Activated B cell treated with CpG ODN at 0.5 μM for 24 hours (primary cell): ENCODE measurements at regions of chr2 and their contacts with region 1.

Region 1: DNA sequence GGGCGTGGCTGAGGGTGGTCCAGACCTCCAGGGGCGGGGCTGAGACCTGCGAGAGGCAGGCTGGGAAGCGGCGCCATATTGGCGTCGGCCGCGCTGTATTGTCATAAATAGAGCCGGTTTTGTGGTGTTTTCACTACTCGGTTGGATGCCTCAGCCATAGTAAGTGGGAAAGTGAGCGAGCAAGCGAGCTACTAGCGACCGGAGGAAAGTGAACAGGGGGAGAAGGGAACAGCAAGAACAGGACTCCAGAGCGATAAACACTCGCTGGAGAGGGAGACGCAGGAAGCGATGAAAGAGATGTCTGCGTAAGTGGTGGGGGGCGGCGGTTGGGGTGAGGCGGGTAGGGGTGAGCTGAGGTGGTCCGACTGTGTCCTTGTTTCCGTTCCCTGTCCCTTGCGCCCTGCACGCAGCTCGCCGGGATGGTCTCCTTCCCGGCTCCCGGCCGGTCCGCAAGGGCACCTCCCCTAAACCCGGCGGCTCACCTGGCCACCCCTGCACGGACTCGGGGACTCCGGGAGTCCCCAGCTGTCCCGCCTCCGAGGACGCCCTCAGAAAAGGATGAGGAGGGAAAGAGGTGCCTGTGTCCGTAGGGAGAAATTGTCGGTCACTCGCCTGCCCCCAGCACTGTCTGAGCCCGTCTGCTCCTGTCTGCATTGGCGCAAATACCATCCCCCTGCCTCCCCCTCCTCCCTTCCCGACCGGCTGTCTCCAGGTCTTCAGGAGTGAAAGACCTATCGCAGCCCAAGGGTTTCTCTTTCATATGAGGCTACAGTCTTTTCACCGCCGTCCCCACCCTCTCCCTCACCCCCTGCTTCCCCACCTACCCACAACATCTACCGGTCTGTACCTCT is at the start of gene PAPOLG:
- DNase-seq: peak; percentile 96
- ATAC-seq: peak; percentile 100
- H3K4me3 Mint-ChIP-seq: peak within 1 kb of the TSS; percentile 100
- H3K27ac Mint-ChIP-seq: peak within 1 kb of the TSS; percentile 99
- H3K4me1 Mint-ChIP-seq: peaks cover 29% of the 10 kb centered on the region
- H3K27me3 Mint-ChIP-seq: no peaks in the 10 kb centered on the region
- CTCF ChIP-seq: no peak
- total RNA-seq, gene PAPOLG: 20.3 and 20.5 TPM in 2 replicates

Region 2: GRCh38 chr2:60641811-60642788 is 114.3 kb before region 1 on chr2:
- CTCF ChIA-PET with region 1: no interaction called
- POLR2A ChIA-PET with region 1: no interaction called
- intact Hi-C with region 1: no loop called
- DNase-seq: no peak
- ATAC-seq: peak; percentile 56
- H3K4me3 Mint-ChIP-seq: no peak overlapping the region
- H3K27ac Mint-ChIP-seq: no peak overlapping the region
- H3K4me1 Mint-ChIP-seq: peaks cover 23% of the 10 kb centered on the region
- H3K27me3 Mint-ChIP-seq: peaks cover 3% of the 10 kb centered on the region
- CTCF ChIP-seq: peak; percentile 34

Region 3: DNA sequence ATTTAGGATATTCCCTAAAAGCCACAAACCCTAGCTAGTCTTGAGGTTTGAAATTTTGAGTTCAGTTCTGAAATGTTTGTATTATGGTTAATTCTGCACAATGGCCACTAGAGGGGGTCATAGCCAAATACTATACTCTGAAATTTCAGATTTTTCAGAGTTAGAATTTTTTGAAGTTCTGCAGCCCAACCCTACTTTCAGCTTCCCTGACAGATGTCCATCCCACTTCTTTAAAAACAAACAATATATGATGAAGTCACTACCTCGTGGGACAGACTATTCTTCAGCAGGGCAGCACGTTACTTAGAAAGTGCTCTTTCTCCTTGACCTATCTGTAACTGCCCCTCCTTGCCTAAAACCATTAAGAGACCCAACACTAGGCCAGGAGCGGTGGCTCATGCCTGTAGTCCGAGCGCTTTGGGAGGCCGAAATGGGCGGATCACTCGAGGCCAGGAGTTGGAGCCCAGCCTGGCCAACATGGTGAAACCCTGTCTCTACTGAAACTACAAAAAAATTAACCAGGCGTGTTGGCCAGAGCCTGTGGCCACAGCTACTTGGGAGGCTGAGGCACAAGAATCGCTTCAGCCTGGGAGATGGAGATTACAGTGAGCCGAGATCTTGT is 48.6 kb before region 1 on chr2:
- CTCF ChIA-PET with region 1: interaction called, 3 read pairs
- POLR2A ChIA-PET with region 1: no interaction called
- intact Hi-C with region 1: loop called (anchors 1 kb)
- DNase-seq: no peak
- ATAC-seq: peak; percentile 28
- H3K4me3 Mint-ChIP-seq: no peak overlapping the region
- H3K27ac Mint-ChIP-seq: no peak overlapping the region
- H3K4me1 Mint-ChIP-seq: no peaks in the 10 kb centered on the region
- H3K27me3 Mint-ChIP-seq: peaks cover 5% of the 10 kb centered on the region
- CTCF ChIP-seq: no peak

Region 4: GRCh38 chr2:60775048-60775639 is 18.7 kb after region 1 on chr2:
- CTCF ChIA-PET with region 1: no interaction called
- POLR2A ChIA-PET with region 1: no interaction called
- intact Hi-C with region 1: no loop called
- DNase-seq: no peak
- ATAC-seq: no peak
- H3K4me3 Mint-ChIP-seq: no peak overlapping the region
- H3K27ac Mint-ChIP-seq: no peak overlapping the region
- H3K4me1 Mint-ChIP-seq: no peaks in the 10 kb centered on the region
- H3K27me3 Mint-ChIP-seq: no peaks in the 10 kb centered on the region
- CTCF ChIP-seq: no peak

Region 5: GRCh38 chr2:61065715-61066709 is 309.6 kb after region 1 on chr2 and contains the start of gene SANBR:
- CTCF ChIA-PET with region 1: no interaction called
- POLR2A ChIA-PET with region 1: interaction called, 11 read pairs
- intact Hi-C with region 1: loop called (anchors 1 kb)
- DNase-seq: peak; percentile 85
- ATAC-seq: peak; percentile 98
- H3K4me3 Mint-ChIP-seq: peak within 1 kb of the TSS; percentile 96
- H3K27ac Mint-ChIP-seq: peak within 1 kb of the TSS; percentile 82
- H3K4me1 Mint-ChIP-seq: peaks cover 11% of the 10 kb centered on the region
- H3K27me3 Mint-ChIP-seq: no peaks in the 10 kb centered on the region
- CTCF ChIP-seq: no peak
- total RNA-seq, gene SANBR: 2.0 and 2.2 TPM in 2 replicates

Region 6: DNA sequence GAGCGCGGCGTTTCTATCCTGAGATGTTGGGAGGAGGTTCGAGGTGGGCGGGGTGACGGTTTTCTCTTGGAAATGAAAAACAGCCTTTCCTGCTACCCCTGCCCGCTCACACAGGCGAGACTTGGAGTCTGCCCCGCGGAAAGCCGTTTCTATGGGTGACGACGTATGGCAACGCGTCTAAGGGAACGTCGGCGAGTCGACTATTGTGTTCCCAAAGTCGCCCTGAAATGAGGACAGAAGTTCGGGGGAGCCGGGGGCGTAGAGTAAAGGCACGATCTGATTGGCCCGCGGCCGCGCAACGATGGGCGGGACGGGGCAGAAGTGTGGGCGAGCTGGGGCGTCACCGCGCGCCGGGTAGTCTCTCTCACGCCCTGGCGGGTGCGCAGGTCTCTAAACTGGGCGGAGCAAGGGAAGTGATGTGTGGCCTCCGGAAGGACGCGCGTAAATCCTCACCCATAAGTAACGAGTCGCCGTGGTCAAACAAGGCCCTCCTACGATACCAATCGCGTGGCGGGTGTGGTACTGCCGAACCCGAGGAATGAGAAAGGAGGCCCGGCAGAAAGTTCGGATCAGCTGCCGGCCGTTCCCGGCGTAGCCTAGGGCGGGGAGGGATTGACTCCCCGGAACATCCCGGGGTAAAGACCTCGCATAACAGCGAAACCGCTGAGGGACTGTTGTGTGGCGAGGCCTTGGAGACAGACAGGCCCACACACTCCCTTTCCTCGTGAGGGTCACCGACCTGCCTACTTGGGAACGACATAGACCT is 1007.8 kb after region 1 on chr2:
- CTCF ChIA-PET with region 1: no interaction called
- POLR2A ChIA-PET with region 1: no interaction called
- intact Hi-C with region 1: loop called (anchors 5 kb)
- DNase-seq: peak; percentile 88
- ATAC-seq: peak; percentile 98
- H3K4me3 Mint-ChIP-seq: peak overlapping the region; percentile 95
- H3K27ac Mint-ChIP-seq: peak overlapping the region; percentile 94
- H3K4me1 Mint-ChIP-seq: peaks cover 16% of the 10 kb centered on the region
- H3K27me3 Mint-ChIP-seq: no peaks in the 10 kb centered on the region
- CTCF ChIP-seq: no peak

Region 7: DNA sequence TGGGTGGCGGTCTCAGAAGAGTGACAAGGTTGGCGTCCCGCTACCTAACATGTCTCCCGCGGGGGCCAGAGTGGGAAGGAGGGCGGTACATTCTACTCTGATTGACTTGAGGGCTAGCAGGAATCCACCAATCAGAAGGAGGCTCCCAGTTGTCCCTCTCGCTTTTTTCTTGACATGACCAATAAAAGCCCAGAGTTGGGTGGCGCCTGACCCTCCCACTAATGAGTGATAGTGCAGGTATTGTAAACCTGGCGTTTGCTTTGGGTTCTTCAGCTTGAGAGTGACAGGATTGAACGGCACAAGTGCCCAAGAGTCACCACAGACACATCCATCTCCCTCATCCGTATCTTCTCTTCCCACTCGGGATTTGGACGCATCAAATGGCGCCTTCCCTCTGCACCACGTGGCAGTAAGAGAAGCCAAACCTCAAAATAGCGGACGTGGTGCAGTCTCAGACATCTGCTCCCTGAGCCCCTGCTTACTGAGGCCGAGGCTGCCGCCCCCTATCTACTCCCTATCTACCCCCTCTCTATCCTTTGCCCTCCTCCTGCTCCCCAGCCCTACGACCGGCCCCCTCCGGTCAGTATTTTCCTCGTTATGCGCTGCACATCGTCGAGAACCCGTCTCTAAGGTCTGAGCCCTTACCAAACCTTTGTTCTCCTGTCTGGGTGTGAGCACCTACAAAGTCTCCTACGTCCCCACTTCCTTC is 1098.2 kb after region 1 on chr2:
- CTCF ChIA-PET with region 1: no interaction called
- POLR2A ChIA-PET with region 1: no interaction called
- intact Hi-C with region 1: loop called (anchors 2 kb)
- DNase-seq: peak; percentile 69
- ATAC-seq: peak; percentile 86
- H3K4me3 Mint-ChIP-seq: peak overlapping the region; percentile 94
- H3K27ac Mint-ChIP-seq: peak overlapping the region; percentile 95
- H3K4me1 Mint-ChIP-seq: peaks cover 19% of the 10 kb centered on the region
- H3K27me3 Mint-ChIP-seq: no peaks in the 10 kb centered on the region
- CTCF ChIP-seq: no peak